ENCODE measurements at regions of chr1 and their contacts with region 1.

Region 1: GRCh38 chr1:165630629-165631341 is at the start of gene MGST3:
- DNase-seq: peak; percentile 96 to 97
- ATAC-seq: peak; percentile 89
- total RNA-seq, gene MGST3: 366 to 451 TPM

Region 2: DNA sequence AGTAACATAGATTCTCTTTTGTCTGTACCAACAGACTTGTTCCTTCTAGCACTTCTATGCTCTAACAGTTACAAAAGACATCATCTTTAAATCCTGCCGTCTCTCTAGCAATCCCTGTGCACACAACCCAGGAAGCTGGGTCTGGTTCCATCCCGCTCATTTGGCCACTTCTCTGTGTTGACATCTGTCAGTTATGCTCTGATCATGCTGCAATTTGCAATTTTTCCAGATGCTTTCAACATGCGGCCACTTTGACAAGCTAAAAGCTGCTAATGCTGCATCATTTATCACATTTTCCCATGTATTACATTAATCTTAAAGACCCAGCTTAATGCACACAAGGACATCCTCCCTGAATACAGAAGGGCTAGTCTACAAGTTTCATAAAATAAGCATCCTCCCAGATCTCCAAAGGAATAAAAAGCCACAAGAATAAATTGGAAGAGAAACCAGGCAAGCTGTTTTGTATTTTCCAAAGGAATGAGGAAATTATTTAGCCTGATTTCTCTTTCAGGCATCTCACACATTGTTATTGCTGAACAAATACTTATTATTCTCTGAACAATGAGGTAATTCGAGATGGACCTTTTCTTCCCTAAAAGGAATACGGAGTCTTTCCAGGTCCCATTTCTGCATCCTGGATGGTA is 106.0 kb before region 1 on chr1:
- intact Hi-C with region 1: no loop called
- DNase-seq: no peak
- ATAC-seq: no peak

Region 3: DNA sequence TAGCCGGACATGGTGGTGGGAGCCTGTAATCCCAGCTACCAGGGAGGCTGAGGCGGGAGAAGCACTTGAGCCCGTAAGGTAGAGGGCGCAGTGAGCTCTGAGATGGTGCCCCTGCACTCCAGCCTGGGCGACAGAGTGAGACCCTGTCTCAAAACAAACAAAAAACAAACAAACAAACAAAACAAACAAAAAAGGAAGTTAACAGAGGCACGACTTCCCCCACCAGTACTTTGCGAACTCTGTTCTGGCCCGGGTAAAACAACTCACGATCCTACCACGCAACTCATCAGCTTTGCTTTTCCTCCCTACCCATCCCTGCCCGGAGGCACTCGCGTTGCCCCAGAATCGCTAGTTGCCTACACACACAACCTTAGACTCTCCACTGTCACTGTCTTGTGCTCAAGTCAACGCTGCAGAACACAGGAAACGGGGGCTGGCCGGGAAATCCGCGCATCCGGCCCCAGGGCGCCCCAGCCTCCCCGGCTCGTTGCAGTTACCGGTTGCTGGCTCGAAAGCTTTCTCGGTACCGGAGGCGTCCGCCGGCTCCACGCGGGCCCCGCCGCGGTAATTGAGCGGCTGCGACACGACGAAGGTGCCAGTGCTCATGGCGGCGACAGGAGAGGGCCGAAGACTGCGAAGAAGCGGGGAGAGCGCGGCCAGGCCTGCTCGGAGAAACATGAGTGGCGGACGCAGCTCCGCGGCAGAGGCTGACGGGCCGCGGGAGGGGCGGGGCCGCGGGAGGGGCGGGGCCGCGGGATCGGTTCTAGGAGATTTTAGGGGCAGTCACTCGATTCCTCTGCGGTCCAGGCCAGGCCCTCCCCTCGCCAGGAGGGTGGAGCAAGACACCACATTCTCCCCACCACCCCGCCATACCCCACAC is 67.3 kb after region 1 on chr1 and contains the start of gene ALDH9A1:
- intact Hi-C with region 1: loop called in 1 of 2 experiments (anchors 2 kb)
- DNase-seq: peak; percentile 89 to 90
- ATAC-seq: peak; percentile 95
- total RNA-seq, gene ALDH9A1: 63.8 to 65.6 TPM